ENCODE measurements at regions of chr4 and their contacts with region 1.

Region 1: DNA sequence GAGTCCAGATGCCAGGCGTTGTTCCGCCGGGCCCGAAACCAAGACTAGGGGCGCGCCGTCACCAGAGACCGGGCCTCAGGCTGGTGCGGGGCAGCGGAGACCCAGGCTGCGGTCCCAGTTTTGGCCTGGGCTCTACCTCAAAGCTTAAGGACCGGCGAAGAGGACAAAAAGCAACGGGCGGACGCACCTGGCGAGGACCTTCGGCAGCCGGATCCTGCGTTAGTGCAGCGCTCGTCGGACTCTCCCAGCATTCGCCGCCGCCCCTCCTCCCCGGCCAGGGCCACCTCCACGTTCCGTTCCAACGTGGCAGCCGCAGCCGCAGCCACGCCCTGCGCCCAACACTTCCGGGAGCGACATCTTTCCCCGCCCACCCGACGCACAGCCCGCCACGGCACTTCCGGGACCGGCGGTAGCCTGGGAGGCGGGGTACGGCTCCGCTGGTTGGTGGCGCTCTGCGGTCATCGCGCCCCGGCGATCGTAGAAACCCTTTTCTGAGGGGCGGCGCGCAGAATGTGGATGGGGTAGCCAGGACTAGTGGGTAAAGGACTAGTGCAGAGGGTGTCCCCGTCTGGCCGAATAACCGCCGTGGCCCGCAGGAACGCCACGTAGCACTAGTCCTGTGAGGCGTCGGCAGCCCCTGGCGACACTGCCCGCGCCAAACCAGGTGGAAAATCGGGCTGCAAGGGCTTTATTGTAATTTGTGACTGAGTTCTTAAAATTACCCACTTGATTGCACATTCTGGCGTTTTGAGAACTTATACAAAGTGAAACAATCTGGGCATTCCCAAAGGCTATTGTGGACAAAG is at the start of gene SEC31A:
- DNase-seq: peak; percentile 96
- H3K4me3 Mint-ChIP-seq: peak within 1 kb of the TSS; percentile 89
- H3K27ac Mint-ChIP-seq: peak within 1 kb of the TSS; percentile 91
- H3K4me1 Mint-ChIP-seq: peaks cover 43% of the 10 kb centered on the region
- H3K27me3 Mint-ChIP-seq: no peaks in the 10 kb centered on the region
- total RNA-seq, gene SEC31A: 138 and 142 TPM in 2 replicates

Region 2: GRCh38 chr4:82851885-82852750 is 39.0 kb before region 1 on chr4:
- intact Hi-C with region 1: loop called (anchors 5 kb)
- DNase-seq: no peak
- H3K4me3 Mint-ChIP-seq: no peak overlapping the region
- H3K27ac Mint-ChIP-seq: peak overlapping the region; percentile 68
- H3K4me1 Mint-ChIP-seq: peaks cover 7% of the 10 kb centered on the region
- H3K27me3 Mint-ChIP-seq: no peaks in the 10 kb centered on the region

Region 3: DNA sequence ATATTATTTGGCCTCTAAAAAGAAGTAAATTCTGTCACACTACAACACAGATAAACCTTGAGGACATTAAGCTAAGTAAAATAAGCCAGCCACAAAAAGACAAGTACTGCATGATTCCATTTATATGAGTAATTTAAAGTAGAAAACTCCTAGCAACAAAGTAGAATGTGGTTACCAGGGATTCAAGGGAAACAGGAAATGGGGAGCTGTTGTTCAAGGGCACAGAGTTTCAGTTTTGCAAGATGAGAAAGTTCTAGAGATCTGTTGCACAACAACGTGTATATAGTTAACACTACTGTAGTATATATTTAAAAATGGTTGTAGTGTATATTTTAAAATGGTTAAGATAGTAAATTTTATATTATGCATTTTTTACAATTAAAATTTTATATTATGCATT is 25.5 kb before region 1 on chr4:
- intact Hi-C with region 1: loop called (anchors 1 kb)
- DNase-seq: peak; percentile 40
- H3K4me3 Mint-ChIP-seq: peak overlapping the region; percentile 11
- H3K27ac Mint-ChIP-seq: peak overlapping the region; percentile 43
- H3K4me1 Mint-ChIP-seq: peaks cover 34% of the 10 kb centered on the region
- H3K27me3 Mint-ChIP-seq: no peaks in the 10 kb centered on the region

Measured in activated T-helper 2 cell treated with anti-CD3 and anti-CD28 coated beads, Interferon-gamma antibody, Interleukin-2, Interleukin-4, amounts not matched to agents 10 μg/mL and 5 μg/mL and 100 μg/mL, durations not matched to agents 14 hours and 24 hours and 36 hours (primary cell).